HEK293 (cell line): ENCODE measurements at regions of chr17 and their contacts with region 1.

Region 1: GRCh38 chr17:34146440-34147043 is 108.5 kb upstream of the CCL2 start:
- H3K4me3 ChIP-seq: no peak overlapping the region
- H3K27ac ChIP-seq: no peak overlapping the region
- H3K4me1 ChIP-seq: no peaks in the 10 kb centered on the region
- CTCF ChIP-seq: peak; percentile 74

Region 2: GRCh38 chr17:33725675-33726271 is 420.8 kb before region 1 on chr17:
- CTCF ChIA-PET with region 1: interaction called, 10 read pairs
- POLR2A ChIA-PET with region 1: no interaction called
- H3K4me3 ChIP-seq: no peak overlapping the region
- H3K27ac ChIP-seq: no peak overlapping the region
- H3K4me1 ChIP-seq: no peaks in the 10 kb centered on the region
- CTCF ChIP-seq: no peak

Region 3: GRCh38 chr17:33927732-33928133 is 218.8 kb before region 1 on chr17:
- CTCF ChIA-PET with region 1: interaction called, 59 read pairs
- POLR2A ChIA-PET with region 1: no interaction called
- H3K4me3 ChIP-seq: no peak overlapping the region
- H3K27ac ChIP-seq: no peak overlapping the region
- H3K4me1 ChIP-seq: 0 out of 2 replicates have a peak, but pooled peaks cover 2% of the 10 kb centered on the region
- CTCF ChIP-seq: no peak

Region 4: DNA sequence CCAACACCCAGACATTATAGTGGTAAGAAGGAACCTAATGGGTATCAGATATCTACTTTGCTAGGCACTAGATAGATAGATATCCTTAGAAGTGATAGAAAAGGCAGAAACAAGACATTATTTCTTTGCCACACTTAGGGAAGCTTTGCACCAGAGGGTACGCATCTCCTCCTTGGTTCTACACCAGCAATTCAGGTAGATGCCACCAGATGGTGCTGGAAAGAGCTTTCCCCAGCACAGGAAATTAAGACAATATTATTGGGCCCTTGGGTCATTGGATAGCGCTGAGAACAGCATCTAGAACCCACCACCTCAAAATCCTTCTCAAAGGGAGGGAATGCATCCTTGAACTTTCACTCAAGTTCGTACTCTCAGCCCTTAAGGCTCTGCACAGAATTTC is 65.3 kb before region 1 on chr17:
- CTCF ChIA-PET with region 1: interaction called, 22 read pairs
- POLR2A ChIA-PET with region 1: no interaction called
- H3K4me3 ChIP-seq: no peak overlapping the region
- H3K27ac ChIP-seq: no peak overlapping the region
- H3K4me1 ChIP-seq: no peaks in the 10 kb centered on the region
- CTCF ChIP-seq: no peak

Region 5: DNA sequence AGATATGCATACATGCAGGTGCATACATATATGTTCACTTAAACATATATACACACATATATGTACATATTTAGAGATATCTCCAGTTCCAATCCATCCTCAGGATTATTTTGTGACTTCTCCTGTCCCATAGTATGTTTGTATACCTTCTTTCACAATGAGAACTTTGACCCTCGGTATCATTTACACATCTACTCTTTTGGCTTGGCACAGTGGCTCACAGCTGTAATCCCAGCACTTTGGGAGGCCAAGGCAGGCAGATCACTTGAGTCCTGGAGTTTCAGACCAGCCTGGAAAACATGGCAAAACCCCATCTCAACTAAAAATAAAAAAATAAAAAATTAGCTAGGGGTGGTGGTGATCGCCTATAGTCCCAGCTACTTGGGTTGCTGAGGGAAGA is 39.5 kb before region 1 on chr17:
- CTCF ChIA-PET with region 1: no interaction called
- POLR2A ChIA-PET with region 1: no interaction called
- H3K4me3 ChIP-seq: no peak overlapping the region
- H3K27ac ChIP-seq: no peak overlapping the region
- H3K4me1 ChIP-seq: no peaks in the 10 kb centered on the region
- CTCF ChIP-seq: no peak

Region 6: GRCh38 chr17:34156741-34157589 is 10.4 kb after region 1 on chr17:
- CTCF ChIA-PET with region 1: interaction called, 31 read pairs
- POLR2A ChIA-PET with region 1: no interaction called
- H3K4me3 ChIP-seq: peak overlapping the region; percentile 15
- H3K27ac ChIP-seq: no peak overlapping the region
- H3K4me1 ChIP-seq: 0 out of 2 replicates have a peak, but pooled peaks cover 2% of the 10 kb centered on the region
- CTCF ChIP-seq: no peak

Region 7: GRCh38 chr17:34171245-34171818 is 24.8 kb after region 1 on chr17:
- CTCF ChIA-PET with region 1: interaction called, 23 read pairs
- POLR2A ChIA-PET with region 1: no interaction called
- H3K4me3 ChIP-seq: no peak overlapping the region
- H3K27ac ChIP-seq: no peak overlapping the region
- H3K4me1 ChIP-seq: peaks cover 5% of the 10 kb centered on the region; the same call in 1 of the 2 replicates
- CTCF ChIP-seq: peak; percentile 41; the same call in 1 of the 2 replicates